ENCODE measurements at regions of chr2 and their contacts with region 1.

Region 1: DNA sequence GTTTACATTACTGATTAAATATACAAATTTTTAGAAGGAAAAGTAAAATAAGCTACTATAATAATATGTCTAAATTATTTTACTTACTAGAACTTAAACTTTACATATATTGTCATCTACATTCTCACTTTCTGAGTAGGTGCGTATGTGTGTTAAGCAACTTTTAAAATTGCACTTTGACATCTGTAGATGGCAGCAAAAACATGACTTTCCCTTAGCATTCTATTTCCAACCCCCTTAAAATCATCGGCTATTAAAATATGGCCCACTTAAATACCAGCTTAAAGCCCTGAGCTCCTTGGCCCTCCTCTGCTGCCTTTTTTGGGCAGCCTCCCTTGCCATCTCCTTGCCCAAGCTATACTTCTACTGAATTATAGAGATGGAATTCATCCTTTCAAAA is 78.0 kb downstream of the UPP2 start:
- DNase-seq: peak in 1 of 4 donors; percentile 44
- ATAC-seq: peak; percentile 36
- H3K4me3 ChIP-seq: no peak overlapping the region
- H3K27ac ChIP-seq: no peak overlapping the region
- H3K4me1 ChIP-seq: peaks cover 0 to 2% of the 10 kb centered on the region in 2 donors
- H3K27me3 ChIP-seq: no peaks in the 10 kb centered on the region
- CTCF ChIP-seq: peak in 1 of 2 donors; percentile 41

Region 2: GRCh38 chr2:158456309-158457066 is 276.8 kb after region 1 on chr2 and contains the starts of genes CCDC148 and PKP4:
- intact Hi-C with region 1: loop called in 1 of 2 experiments (anchors 10 kb)
- DNase-seq: peak; percentile 91 to 97 (median 94)
- ATAC-seq: peak; percentile 90
- H3K4me3 ChIP-seq: peak within 1 kb of the TSS; percentile 87 to 97
- H3K27ac ChIP-seq: peak within 1 kb of the TSS; percentile 86 to 94
- H3K4me1 ChIP-seq: peaks cover 0 to 40% of the 10 kb centered on the region in 2 donors
- H3K27me3 ChIP-seq: no peaks in the 10 kb centered on the region
- CTCF ChIP-seq: no peak
- polyA plus RNA-seq, gene CCDC148: 3.1 to 6.0 (median 3.9) TPM
- polyA plus RNA-seq, gene PKP4: 96.2 to 129 (median 119) TPM

Region 3: DNA sequence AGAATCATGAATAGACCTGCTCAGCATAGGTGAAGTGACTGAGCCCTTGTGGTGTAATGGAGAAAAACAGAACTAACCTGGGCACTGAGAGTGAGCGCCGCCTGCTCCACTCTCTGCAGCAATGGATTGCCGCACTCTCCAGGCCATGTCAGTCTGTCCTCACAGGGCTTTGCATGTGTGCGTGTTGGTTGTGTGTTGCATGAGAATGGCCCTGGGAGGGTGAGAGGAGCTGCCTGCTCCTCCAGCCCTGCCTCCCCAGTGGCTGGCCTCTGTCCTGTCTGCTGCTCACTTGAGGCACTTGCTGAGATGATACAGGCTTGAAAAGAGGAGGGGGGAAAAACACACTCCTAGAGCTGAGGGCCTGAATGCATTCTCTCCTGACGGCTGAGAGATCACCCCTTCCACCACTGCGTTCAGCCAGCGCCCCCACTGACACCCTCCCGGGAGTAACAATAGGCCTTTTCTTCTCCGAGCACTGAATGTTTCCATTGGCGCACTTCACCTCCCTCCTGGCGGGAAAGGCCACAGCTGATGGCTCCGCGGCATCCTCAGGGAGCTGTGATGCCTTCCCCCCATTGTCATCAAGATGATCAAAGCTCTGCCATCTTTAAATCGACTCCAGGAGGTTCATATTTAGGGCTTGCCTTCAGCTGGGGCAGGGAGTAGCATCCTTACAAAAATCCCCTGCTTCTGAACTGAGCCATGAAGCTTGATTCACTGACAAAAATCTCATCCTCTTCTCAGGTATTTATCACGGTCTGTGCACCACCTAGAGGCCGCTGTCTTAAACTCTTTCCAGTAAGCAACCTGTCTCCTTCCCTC is 565.6 kb after region 1 on chr2:
- intact Hi-C with region 1: loop called in 1 of 2 experiments (anchors 10 kb)
- DNase-seq: peak in 1 of 4 donors; percentile 70
- ATAC-seq: peak; percentile 84
- H3K4me3 ChIP-seq: no peak overlapping the region
- H3K27ac ChIP-seq: peak overlapping the region in 1 of 2 donors; percentile 48
- H3K4me1 ChIP-seq: peaks cover 0 to 8% of the 10 kb centered on the region in 2 donors
- H3K27me3 ChIP-seq: no peaks in the 10 kb centered on the region
- CTCF ChIP-seq: peak; percentile 22 to 40

Measured in left lung (tissue), 14 donors.